PC-9 (cell line): ENCODE measurements at regions of chr15 and their contacts with region 1.

Region 1: GRCh38 chr15:74127260-74127953 is 3.0 kb upstream of the ISLR2 start:
- DNase-seq: peak; percentile 62 to 93
- H3K4me3 ChIP-seq: peak overlapping the region; percentile 59
- H3K27ac ChIP-seq: no peak overlapping the region
- H3K4me1 ChIP-seq: 0 out of 2 replicates have a peak, but pooled peaks cover 8% of the 10 kb centered on the region
- H3K27me3 ChIP-seq: peaks cover 18% of the 10 kb centered on the region
- CTCF ChIP-seq: peak; percentile 92

Region 2: GRCh38 chr15:73972984-73973682 is 154.3 kb before region 1 on chr15:
- CTCF ChIA-PET with region 1: no interaction called
- POLR2A ChIA-PET with region 1: no interaction called
- intact Hi-C with region 1: loop called (anchors 2 kb)
- DNase-seq: peak; percentile 68 to 84
- H3K4me3 ChIP-seq: peak overlapping the region; percentile 37; the same call in 1 of the 2 replicates
- H3K27ac ChIP-seq: no peak overlapping the region
- H3K4me1 ChIP-seq: 0 out of 2 replicates have a peak, but pooled peaks cover 4% of the 10 kb centered on the region
- H3K27me3 ChIP-seq: no peaks in the 10 kb centered on the region
- CTCF ChIP-seq: peak; percentile 81

Region 3: GRCh38 chr15:74011610-74012009 is 115.8 kb before region 1 on chr15:
- CTCF ChIA-PET with region 1: no interaction called
- POLR2A ChIA-PET with region 1: no interaction called
- intact Hi-C with region 1: no loop called
- DNase-seq: no peak
- H3K4me3 ChIP-seq: no peak overlapping the region
- H3K27ac ChIP-seq: no peak overlapping the region
- H3K4me1 ChIP-seq: peaks cover 8% of the 10 kb centered on the region; the same call in 1 of the 2 replicates
- H3K27me3 ChIP-seq: no peaks in the 10 kb centered on the region
- CTCF ChIP-seq: no peak

Region 4: GRCh38 chr15:74202452-74203428 is 75.3 kb after region 1 on chr15 and contains the start of gene STRA6:
- CTCF ChIA-PET with region 1: no interaction called
- POLR2A ChIA-PET with region 1: no interaction called
- intact Hi-C with region 1: loop called (anchors 2 kb)
- DNase-seq: peak; percentile 86 to 91
- H3K4me3 ChIP-seq: peak within 1 kb of the TSS; percentile 73
- H3K27ac ChIP-seq: peak within 1 kb of the TSS; percentile 95
- H3K4me1 ChIP-seq: peaks cover 79% of the 10 kb centered on the region
- H3K27me3 ChIP-seq: no peaks in the 10 kb centered on the region
- CTCF ChIP-seq: peak; percentile 39; the same call in 1 of the 2 replicates
- total RNA-seq, gene STRA6: 64.9 and 83.6 TPM in 2 replicates

Region 5: DNA sequence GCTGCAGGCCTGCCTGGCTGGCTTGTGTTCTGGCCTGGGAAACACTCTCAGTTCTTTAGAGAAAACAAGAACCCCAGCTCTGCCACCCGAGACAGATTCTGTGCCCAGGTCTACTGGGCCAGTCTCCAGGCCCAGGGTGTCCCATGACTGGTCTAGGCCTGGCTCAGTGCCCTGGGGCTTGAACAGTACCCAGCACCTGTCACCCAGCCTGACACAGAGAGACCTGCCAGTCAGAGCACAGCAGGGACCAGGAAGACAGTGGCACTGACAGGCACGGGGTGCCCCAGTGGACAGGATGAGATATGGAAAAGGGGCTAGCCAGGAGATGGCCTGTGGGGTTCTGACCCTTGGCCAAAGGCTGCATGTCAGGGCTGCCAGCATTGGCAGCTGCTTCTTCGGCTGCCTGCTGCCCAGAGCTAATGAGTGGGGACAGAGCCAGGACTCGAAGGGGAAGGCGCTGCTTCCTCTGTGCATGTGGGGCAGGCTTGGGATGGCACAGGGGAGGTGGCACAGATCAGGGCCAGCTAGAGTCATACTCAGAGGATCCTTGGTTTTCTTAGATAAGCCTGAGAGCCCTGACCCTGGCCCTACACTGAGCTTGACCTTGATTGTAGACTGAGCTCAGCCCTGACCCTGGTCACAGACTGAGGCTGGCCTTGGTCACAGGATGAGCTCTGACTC is 123.9 kb after region 1 on chr15:
- CTCF ChIA-PET with region 1: interaction called, 10 read pairs
- POLR2A ChIA-PET with region 1: no interaction called
- intact Hi-C with region 1: no loop called
- DNase-seq: no peak
- H3K4me3 ChIP-seq: no peak overlapping the region
- H3K27ac ChIP-seq: no peak overlapping the region
- H3K4me1 ChIP-seq: 0 out of 2 replicates have a peak, but pooled peaks cover 8% of the 10 kb centered on the region
- H3K27me3 ChIP-seq: no peaks in the 10 kb centered on the region
- CTCF ChIP-seq: no peak

Region 6: DNA sequence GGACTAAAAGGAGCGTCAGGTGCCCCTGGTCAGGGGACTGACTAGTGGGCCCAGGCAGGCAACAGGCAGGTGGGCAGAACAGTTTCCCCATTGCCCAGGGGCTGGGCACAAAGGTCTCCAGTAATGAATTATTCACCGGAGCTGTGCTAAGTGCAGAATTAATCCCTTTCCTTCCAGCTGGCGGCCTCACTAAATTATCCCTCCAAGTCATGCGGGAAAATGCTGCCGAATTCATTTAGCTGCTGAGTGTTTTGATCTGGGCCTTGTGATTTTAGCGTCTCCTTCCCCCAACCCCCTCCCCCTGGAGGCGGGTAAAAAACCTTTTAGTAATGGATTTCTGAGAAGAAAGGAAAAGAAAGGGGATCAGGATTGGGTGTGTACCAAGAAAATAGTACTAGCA is 156.0 kb after region 1 on chr15:
- CTCF ChIA-PET with region 1: no interaction called
- POLR2A ChIA-PET with region 1: no interaction called
- intact Hi-C with region 1: no loop called
- DNase-seq: no peak
- H3K4me3 ChIP-seq: no peak overlapping the region
- H3K27ac ChIP-seq: no peak overlapping the region
- H3K4me1 ChIP-seq: no peaks in the 10 kb centered on the region
- H3K27me3 ChIP-seq: peaks cover 60% of the 10 kb centered on the region; the same call in 1 of the 2 replicates
- CTCF ChIP-seq: no peak

Region 7: DNA sequence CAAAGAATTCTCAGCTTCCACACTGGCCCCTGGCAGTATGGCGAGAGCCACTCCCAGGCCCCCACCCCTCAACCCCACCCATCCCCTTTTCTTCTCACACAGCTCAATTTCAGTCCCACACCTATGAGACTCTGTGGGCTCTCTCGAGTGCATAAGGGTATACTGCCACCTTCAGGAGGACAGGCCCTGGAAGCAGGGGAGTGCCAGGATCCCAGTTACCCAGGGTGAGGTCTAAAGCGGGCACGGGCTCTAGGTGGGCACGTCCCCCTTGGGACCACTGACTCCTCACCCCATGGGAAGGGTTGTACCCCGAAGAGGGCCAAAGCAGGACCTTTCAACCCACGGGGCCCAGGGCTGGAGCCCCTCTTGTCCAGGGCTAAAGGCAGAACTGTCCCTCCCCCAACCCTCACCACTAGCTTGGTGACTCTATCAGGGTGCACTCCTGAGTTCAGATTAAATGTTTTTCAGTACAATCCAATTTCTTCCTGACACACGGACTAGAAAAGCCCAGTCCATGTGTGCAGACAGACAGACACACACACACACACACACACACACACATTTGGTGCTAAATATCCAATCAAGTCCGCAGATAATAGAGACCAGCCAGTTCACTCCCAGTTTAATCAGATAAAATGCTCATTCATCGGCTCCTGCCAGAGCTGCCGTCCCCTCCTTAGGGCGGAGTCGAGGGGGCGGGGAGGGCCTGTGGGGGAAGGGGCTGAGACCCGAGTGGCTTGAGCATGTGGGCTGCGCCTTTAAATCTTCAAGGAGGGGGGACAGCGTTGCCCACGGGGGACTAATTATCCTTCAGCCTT is 180.6 kb after region 1 on chr15:
- CTCF ChIA-PET with region 1: interaction called, 26 read pairs
- POLR2A ChIA-PET with region 1: interaction called, 6 read pairs
- intact Hi-C with region 1: loop called (anchors 1 kb)
- DNase-seq: peak; percentile 59 to 68
- H3K4me3 ChIP-seq: no peak overlapping the region
- H3K27ac ChIP-seq: no peak overlapping the region
- H3K4me1 ChIP-seq: peaks cover 6% of the 10 kb centered on the region; the same call in 1 of the 2 replicates
- H3K27me3 ChIP-seq: no peaks in the 10 kb centered on the region
- CTCF ChIP-seq: peak; percentile 84

Region 8: GRCh38 chr15:74382004-74382816 is 254.8 kb after region 1 on chr15:
- CTCF ChIA-PET with region 1: interaction called, 10 read pairs
- POLR2A ChIA-PET with region 1: no interaction called
- intact Hi-C with region 1: no loop called
- DNase-seq: peak; percentile 62 to 91
- H3K4me3 ChIP-seq: no peak overlapping the region
- H3K27ac ChIP-seq: no peak overlapping the region
- H3K4me1 ChIP-seq: peaks cover 63% of the 10 kb centered on the region
- H3K27me3 ChIP-seq: no peaks in the 10 kb centered on the region
- CTCF ChIP-seq: peak; percentile 91